ENCODE measurements at regions of chr4 and their contacts with region 1.

Region 1: DNA sequence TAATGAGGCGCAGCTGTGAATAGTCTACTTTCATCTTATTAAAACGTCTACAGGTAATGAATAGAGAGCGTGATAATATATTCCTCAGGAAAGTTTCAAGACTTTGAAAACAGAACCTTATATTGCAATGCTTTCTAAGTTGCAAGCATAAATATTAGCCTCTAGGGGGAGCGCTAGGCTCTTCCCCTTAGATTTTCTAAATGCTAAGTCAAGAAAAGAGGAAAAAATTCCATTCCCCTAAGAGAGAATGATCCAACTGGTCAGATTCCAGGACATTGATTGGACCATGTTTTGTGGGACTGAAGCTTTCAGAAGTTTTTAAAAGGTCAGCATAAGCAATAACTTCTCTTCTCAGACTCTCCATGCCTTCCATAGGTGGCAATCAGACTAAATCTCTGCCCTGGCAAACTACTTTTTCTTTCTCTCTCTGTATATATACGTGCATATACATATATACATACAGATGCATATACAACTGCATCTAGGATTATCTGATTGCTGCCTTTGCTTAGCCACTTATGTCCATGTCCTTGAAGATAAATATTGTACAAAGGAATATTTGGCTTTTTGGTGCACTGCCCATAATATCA is 492.9 kb downstream of the INPP4B start:
- DNase-seq: peak; percentile 46
- H3K4me3 ChIP-seq: no peak overlapping the region
- CTCF ChIP-seq: peak; percentile 56

Region 2: GRCh38 chr4:142372530-142373260 is 19.5 kb after region 1 on chr4:
- CTCF ChIA-PET with region 1: interaction called, 30 read pairs
- POLR2A ChIA-PET with region 1: no interaction called
- DNase-seq: no peak
- H3K4me3 ChIP-seq: no peak overlapping the region
- CTCF ChIP-seq: no peak

Region 3: GRCh38 chr4:142393127-142393526 is 39.9 kb after region 1 on chr4:
- CTCF ChIA-PET with region 1: no interaction called
- POLR2A ChIA-PET with region 1: no interaction called
- DNase-seq: no peak
- H3K4me3 ChIP-seq: no peak overlapping the region
- CTCF ChIP-seq: no peak

Region 4: DNA sequence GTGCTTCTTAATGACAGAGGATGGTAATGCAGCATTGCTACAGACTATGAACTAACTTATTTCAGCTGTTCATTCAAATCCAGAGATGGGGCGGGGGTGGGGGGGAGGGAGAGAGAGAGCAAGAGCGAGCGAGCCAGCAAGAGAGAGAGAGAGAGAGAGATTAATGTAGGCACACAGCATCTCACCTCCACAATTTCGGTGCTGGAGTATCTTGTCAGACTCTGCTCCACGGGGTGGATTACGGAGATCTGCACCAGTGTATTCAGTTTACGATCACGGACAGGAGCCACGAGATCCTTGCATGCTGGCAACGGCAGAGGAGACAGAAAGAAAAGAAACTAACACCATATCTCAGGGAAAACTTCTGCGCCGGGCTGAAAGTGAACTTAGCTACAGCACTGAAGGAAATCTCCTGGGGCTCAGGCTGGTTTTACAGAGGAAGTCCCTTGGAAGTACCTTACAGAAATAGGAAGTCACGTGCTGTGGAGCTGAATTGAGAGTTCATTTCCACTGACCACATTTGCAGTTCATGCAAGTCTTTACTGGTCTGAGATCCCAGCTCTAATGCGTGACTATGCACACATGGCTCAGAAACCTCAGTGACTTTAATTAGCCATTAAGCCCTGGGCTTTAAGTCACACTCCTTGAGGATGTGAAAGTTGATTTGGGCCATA is 51.9 kb after region 1 on chr4:
- CTCF ChIA-PET with region 1: interaction called, 10 read pairs
- POLR2A ChIA-PET with region 1: no interaction called
- DNase-seq: no peak
- H3K4me3 ChIP-seq: peak overlapping the region; percentile 64
- CTCF ChIP-seq: no peak

Region 5: DNA sequence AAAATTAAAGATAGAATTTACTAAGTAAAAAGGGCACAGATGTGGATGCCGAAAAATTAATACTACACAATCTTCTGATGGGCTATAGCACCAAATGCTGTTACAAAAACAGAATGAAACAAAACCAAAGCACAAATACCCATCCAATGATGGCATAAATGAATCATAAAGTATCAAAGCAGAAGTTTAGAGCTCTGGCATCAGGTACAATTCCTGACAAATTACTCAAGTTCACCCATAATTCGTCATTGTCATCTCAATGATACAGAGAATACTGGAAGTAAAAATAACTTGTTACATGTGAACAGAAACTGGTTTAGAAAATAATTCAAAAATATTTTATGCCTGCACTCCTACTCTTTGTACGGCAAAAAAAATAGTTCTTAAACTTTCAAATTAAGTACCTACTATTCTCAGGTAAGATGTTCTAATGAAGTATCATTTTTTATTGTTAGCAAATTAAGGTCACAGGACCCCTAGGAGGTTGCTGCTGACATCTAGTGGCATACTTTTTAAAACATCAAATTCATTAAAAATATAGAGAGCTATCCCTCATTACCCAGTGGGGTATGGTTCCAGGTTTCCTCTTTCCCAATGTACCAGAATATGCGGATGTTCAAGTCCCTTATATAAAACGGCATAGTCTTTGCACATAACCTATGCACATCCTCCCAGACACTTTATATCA is 366.8 kb after region 1 on chr4:
- CTCF ChIA-PET with region 1: interaction called, 55 read pairs
- POLR2A ChIA-PET with region 1: no interaction called
- DNase-seq: no peak
- H3K4me3 ChIP-seq: no peak overlapping the region
- CTCF ChIP-seq: peak; percentile 21

Region 6: GRCh38 chr4:142838774-142839173 is 485.5 kb after region 1 on chr4:
- CTCF ChIA-PET with region 1: interaction called, 10 read pairs
- POLR2A ChIA-PET with region 1: no interaction called
- DNase-seq: no peak
- H3K4me3 ChIP-seq: no peak overlapping the region
- CTCF ChIP-seq: no peak

Measured in AG04449 (cell line).